ENCODE measurements at regions of chr10 and their contacts with region 1.

Region 1: GRCh38 chr10:132048294-132048667 is 17.5 kb upstream of the JAKMIP3 start:
- DNase-seq: no peak
- ATAC-seq: no peak
- H3K4me3 ChIP-seq: no peak overlapping the region
- H3K27ac ChIP-seq: no peak overlapping the region
- H3K4me1 ChIP-seq: no peaks in the 10 kb centered on the region
- H3K27me3 ChIP-seq: peaks cover 0 to 12% (median 0%) of the 10 kb centered on the region in 9 donors
- CTCF ChIP-seq: no peak
- POLR2A ChIP-seq: no peak

Region 2: DNA sequence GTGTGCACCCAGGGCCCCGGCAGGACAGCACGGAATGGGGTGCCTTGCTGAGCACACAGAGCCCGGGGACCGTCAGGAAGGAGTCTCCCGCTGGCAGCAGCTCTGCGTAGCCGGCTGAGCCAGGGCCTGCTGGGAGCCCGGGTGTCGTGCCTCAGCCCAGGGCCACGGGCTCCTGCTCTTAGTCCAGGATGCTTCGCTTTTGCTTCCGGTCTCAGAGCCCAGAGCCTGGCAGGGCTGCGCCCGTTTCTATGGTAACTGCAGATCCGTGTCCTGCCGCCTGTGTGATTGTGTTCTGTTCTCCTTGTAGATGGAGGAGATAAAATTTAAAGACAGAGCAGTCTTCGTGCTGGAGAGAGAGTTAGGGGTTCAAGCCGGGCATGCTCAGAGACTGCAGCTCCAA is 84.7 kb after region 1 on chr10:
- intact Hi-C with region 1: loop called in 2 of 10 experiments (anchors 10 kb)
- DNase-seq: peak in 3 of 5 donors; percentile 11 to 52 (median 25)
- ATAC-seq: no peak
- H3K4me3 ChIP-seq: no peak overlapping the region
- H3K27ac ChIP-seq: no peak overlapping the region
- H3K4me1 ChIP-seq: no peaks in the 10 kb centered on the region
- H3K27me3 ChIP-seq: peaks cover 0 to 4% (median 0%) of the 10 kb centered on the region in 9 donors
- CTCF ChIP-seq: no peak
- POLR2A ChIP-seq: no peak

Measured in heart left ventricle (tissue), 16 donors.